Endothelial cell of umbilical vein (primary cell): ENCODE measurements at regions of chr21 and their contacts with region 1.

Region 1: DNA sequence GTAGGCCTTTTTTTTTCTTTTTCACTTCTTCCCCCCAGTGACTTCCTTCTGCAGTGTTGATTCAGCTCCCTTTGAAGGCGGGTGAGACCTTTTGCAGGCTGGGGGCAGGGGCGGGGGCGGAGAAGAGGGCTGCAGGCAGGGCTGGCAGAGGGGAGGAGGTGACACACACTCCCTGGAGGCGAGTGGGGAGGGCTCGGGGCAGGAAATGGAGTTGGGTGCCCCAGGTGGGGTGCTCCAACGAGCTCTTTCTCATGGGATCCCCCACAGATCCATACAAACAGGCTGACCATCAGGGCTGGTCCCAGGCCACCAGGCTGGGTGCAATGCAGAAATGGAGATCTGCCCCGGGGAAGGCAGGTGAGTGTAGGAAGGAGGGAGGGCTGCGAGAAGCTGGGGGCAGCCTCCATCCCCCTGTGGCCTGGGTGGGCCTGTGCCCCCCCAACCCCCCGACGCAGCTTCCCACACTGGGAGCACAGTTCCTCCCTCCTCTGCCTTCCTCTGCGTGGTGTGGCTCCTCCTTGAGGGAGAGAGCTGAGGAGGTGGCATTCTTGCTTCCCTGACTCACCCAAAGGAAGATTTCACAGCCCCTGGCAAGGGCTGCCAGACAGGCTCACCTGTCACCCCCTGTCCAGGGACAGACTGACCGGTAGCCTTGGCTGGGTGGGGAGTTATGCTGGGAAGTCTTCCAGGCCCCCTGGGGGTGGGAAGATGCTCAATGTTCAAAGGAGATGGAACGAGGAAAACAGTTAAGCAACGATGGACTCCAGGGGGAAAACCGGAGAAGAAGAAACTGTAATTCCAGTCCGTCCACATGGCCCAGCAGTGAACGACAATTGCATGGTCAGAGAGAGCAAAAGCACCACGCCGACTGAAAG is 7.1 kb upstream of the ITGB2 start:
- DNase-seq: no peak
- H3K4me3 ChIP-seq: no peak overlapping the region
- H3K27ac ChIP-seq: no peak overlapping the region
- H3K4me1 ChIP-seq: peaks cover 31% of the 10 kb centered on the region
- H3K27me3 ChIP-seq: peaks cover 7 to 16% of the 10 kb centered on the region in 2 experiments
- CTCF ChIP-seq: no peak
- POLR2A ChIP-seq: no peak

Region 2: DNA sequence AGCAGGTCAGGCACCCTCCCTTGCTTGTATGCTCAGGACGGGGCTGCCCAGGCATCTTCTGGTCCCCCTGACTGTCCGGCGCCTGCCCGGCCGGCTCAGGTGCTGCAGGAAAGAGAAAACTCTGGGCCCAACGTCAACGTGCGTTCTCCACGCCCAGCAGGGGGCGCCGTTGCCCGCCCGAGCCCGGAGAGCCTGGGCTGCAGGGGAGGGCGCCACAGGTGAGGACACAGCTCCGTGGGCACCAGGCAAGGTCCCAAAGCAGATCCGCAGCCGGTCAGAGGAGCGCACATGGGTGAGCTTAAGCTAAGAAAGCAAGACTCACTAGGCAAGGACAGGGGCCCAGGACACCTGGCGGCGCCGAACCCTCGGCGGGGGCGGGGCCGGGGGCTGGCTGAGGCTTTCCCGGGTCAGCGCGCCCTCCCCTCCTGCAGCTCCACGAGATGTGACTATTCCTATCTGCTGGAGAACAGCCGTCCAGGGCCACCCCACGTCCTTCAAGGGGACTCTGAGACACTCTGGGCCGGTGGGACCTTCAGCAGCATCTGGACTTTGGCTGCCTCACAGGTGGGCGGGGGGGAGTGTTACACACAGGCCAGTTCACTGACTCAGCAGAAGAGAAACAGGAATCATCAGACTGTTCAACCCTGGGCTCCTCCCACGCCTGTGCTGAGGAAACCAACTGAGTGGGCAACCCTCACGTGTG is 417.2 kb before region 1 on chr21:
- CTCF ChIA-PET with region 1: interaction called, 22 read pairs
- POLR2A ChIA-PET with region 1: no interaction called
- dilution Hi-C with region 1: no loop called
- intact Hi-C with region 1: loop called (anchors 10 kb)
- DNase-seq: peak; percentile 33
- H3K4me3 ChIP-seq: no peak overlapping the region
- H3K27ac ChIP-seq: no peak overlapping the region
- H3K4me1 ChIP-seq: no peaks in the 10 kb centered on the region
- H3K27me3 ChIP-seq: no peaks in the 10 kb centered on the region
- CTCF ChIP-seq: peak; percentile 82 to 90
- POLR2A ChIP-seq: no peak

Region 3: DNA sequence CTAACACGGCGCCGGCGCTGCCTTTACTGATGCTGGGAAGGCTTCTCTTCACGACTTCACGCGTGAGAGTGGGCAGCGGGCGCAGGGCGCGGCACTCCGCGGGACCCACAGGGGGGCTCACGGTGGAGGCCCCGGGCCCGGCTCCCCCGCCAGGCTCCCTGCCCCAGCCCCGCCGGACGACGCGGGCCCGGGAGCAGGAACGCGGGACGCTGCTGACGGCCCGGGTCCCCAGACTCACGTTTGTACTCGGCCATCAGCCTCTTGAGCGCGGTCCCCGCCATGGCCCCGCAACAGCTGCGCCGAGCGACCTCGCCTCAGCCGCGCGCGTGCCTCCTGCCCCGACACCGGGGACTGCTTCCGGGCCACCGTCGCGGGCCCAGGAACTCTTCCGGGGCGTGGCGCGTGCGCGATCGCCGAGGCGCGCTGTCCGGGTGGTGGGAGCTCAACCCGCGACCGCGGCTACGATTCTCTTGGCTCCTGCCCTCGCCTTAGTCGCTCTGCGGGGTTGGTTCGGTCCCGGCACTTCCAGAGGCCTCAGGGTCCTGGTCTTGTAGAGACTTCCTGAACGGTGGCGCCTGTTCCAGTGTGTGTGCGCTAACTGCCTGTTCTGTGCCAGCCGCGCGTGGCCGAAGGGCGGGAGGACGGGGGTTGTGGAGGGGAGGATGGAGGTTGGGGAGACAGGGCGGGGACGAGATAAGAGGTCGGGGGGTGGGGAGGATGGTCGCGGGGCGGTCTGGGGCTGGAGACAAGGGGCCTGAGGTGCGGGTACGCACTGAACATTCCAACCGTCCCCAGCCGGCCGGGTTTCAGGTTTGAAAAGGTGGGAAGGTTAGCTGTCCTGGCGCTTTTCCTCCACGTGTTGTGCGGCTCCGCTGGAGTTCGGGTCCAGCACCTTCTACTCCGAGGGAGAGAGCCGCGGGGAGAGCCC is 126.1 kb before region 1 on chr21 and contains the start of gene UBE2G2:
- CTCF ChIA-PET with region 1: interaction called, 62 read pairs
- POLR2A ChIA-PET with region 1: no interaction called
- dilution Hi-C with region 1: no loop called
- intact Hi-C with region 1: loop called (anchors 2 kb)
- DNase-seq: peak; percentile 80
- H3K4me3 ChIP-seq: peak within 1 kb of the TSS; percentile 57 to 97 (median 94)
- H3K27ac ChIP-seq: peak within 1 kb of the TSS; percentile 54
- H3K4me1 ChIP-seq: peaks cover 20% of the 10 kb centered on the region
- H3K27me3 ChIP-seq: no peaks in the 10 kb centered on the region
- CTCF ChIP-seq: no peak
- POLR2A ChIP-seq: peak; percentile 74
- total RNA-seq, gene UBE2G2: 114 and 117 TPM in 2 replicates

Region 4: DNA sequence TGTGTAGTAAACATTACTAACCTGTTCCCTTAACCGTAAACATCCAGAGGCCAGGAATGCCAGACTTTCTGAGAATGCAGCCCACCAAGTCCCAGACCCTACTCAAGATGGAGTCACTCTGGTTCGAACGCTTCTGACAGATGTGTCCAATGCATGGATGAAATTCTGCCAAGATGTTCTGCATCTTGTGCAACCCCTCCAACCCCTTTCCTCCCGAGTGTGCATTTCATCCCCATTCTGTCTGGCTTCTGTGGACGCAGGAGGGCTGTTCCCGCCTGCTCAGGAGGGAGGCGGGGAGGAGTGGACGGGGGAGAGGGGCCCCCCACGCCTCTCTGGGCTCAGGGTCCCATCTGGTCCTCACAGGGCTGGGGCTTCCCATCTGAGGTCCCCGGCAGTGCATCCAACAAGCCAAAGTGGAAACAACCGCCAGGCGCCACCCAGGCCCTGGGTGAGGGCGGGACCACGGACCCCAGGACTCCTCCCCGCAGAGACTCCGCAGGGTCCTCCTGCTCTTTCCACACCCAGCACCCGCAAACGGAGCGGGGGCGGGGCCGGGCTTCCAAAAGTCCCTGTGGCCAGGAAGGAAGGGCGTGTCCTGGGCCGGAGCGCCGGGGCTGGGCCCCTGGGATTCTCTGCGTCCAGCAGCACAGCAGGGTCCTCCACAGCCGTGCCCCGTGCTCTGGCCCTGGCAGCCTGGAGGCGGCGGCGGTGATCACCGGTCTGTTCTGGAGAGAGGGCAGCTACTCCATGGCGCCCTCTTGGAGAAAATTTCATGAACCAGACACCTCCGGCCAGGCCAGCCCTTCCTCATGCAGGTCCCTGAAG is 82.2 kb before region 1 on chr21:
- CTCF ChIA-PET with region 1: interaction called, 11 read pairs
- POLR2A ChIA-PET with region 1: no interaction called
- dilution Hi-C with region 1: no loop called
- intact Hi-C with region 1: no loop called
- DNase-seq: peak; percentile 68
- H3K4me3 ChIP-seq: peak overlapping the region; percentile 7 to 28 (median 11)
- H3K27ac ChIP-seq: no peak overlapping the region
- H3K4me1 ChIP-seq: peaks cover 16% of the 10 kb centered on the region
- H3K27me3 ChIP-seq: peaks cover 2 to 4% of the 10 kb centered on the region in 2 experiments
- CTCF ChIP-seq: peak; percentile 22 to 53
- POLR2A ChIP-seq: no peak

Region 5: GRCh38 chr21:44865561-44866280 is 62.1 kb before region 1 on chr21:
- CTCF ChIA-PET with region 1: interaction called, 11 read pairs
- POLR2A ChIA-PET with region 1: no interaction called
- dilution Hi-C with region 1: no loop called
- intact Hi-C with region 1: no loop called
- DNase-seq: no peak
- H3K4me3 ChIP-seq: no peak overlapping the region
- H3K27ac ChIP-seq: no peak overlapping the region
- H3K4me1 ChIP-seq: peaks cover 49% of the 10 kb centered on the region
- H3K27me3 ChIP-seq: no peaks in the 10 kb centered on the region
- CTCF ChIP-seq: no peak
- POLR2A ChIP-seq: no peak

Region 6: GRCh38 chr21:44892536-44893277 is 35.1 kb before region 1 on chr21:
- CTCF ChIA-PET with region 1: interaction called, 40 read pairs
- POLR2A ChIA-PET with region 1: interaction called, 3 read pairs
- dilution Hi-C with region 1: no loop called
- intact Hi-C with region 1: loop called (anchors 1 kb)
- DNase-seq: peak; percentile 54
- H3K4me3 ChIP-seq: no peak overlapping the region
- H3K27ac ChIP-seq: no peak overlapping the region
- H3K4me1 ChIP-seq: no peaks in the 10 kb centered on the region
- H3K27me3 ChIP-seq: no peaks in the 10 kb centered on the region
- CTCF ChIP-seq: peak; percentile 91 to 92
- POLR2A ChIP-seq: no peak

Region 7: DNA sequence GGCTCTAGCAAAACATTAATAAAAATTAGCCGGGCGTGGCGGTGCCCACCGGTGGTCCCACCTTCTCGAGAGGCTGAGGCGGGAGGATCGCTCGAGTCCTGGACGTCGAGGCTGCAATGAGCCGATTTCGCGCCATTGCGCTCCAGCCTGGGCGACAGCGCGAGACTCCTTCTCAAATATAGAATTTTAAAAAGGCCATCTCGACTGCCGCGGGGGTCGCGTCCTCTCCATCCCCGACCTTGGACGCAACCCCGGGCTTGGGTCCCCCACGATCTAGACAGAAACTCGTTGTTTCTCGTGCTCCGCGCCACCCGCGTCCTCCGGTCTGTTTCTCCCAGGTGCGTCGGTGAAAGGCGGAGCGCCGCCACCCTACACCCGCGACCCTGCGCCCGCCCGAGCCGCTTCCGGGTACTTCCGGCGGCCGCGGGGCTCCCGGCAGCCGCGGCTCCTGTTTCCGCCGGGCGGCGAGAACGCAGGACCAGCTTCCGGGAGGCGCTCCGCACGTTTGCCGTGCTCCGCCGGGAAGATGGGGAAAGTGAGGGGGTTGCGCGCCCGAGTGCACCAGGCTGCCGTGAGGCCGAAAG is 11.8 kb after region 1 on chr21 and contains the start of gene SLX9:
- CTCF ChIA-PET with region 1: no interaction called
- POLR2A ChIA-PET with region 1: no interaction called
- dilution Hi-C with region 1: no loop called
- intact Hi-C with region 1: no loop called
- DNase-seq: peak; percentile 39
- H3K4me3 ChIP-seq: peak within 1 kb of the TSS; percentile 48 to 83 (median 60)
- H3K27ac ChIP-seq: peak within 1 kb of the TSS; percentile 47
- H3K4me1 ChIP-seq: peaks cover 18% of the 10 kb centered on the region
- H3K27me3 ChIP-seq: no peaks in the 10 kb centered on the region
- CTCF ChIP-seq: no peak
- POLR2A ChIP-seq: peak; percentile 81
- total RNA-seq, gene SLX9: 46.4 and 50.6 TPM in 2 replicates